Dorsolateral prefrontal cortex (tissue), 120 donors: ENCODE measurements at regions of chrX and their contacts with region 1.

Region 1: GRCh38 chrX:64198036-64198435 is 7.5 kb downstream of the AMER1 start:
- DNase-seq: no peak
- H3K4me3 ChIP-seq: no peak overlapping the region
- H3K27ac ChIP-seq: no peak overlapping the region
- H3K27me3 ChIP-seq: peaks cover 0 to 61% (median 10%) of the 10 kb centered on the region in 45 donors
- CTCF ChIP-seq: no peak

Region 2: DNA sequence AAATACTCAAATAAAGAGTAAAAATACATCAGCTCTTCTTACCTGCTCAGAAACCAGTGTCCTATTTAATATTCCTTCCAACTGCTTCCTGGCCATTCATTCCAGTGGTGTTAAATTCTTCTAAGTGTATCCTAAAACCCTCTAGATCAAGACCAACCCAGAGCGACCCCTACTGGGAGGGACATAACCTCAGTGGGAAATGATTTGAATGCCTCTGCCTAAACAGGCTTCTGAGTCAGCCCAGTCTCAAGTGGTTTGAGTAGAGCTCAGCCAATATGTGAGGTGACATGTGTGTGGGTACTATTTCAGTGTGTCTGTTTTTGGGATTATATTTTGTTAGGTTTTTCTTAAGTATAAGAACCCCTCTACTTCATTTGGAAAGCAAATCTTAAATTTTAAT is 279.4 kb before region 1 on chrX:
- intact Hi-C with region 1: no loop called
- DNase-seq: no peak
- H3K4me3 ChIP-seq: no peak overlapping the region
- H3K27ac ChIP-seq: no peak overlapping the region
- H3K27me3 ChIP-seq: peaks cover 0 to 55% (median 6%) of the 10 kb centered on the region in 45 donors
- CTCF ChIP-seq: no peak

Region 3: GRCh38 chrX:64093761-64094160 is 104.3 kb before region 1 on chrX:
- intact Hi-C with region 1: loop called in 1 of 2 experiments (anchors 10 kb)
- DNase-seq: no peak
- H3K4me3 ChIP-seq: no peak overlapping the region
- H3K27ac ChIP-seq: no peak overlapping the region
- H3K27me3 ChIP-seq: peaks cover 0 to 36% (median 4%) of the 10 kb centered on the region in 45 donors
- CTCF ChIP-seq: peak in 51 of 56 donors; percentile 10 to 65 (median 40)